Heart right ventricle (tissue), 16 donors: ENCODE measurements at regions of chr12 and their contacts with region 1.

Region 1: GRCh38 chr12:27747111-27747820 is 32.8 kb upstream of the KLHL42 start:
- DNase-seq: no peak
- ATAC-seq: peak in 2 of 8 donors; percentile 23 to 45
- H3K4me3 ChIP-seq: no peak overlapping the region
- H3K27ac ChIP-seq: peak overlapping the region in 2 of 10 donors; percentile 22 to 45
- H3K4me1 ChIP-seq: peaks cover 0 to 12% (median 0%) of the 10 kb centered on the region in 9 donors
- H3K27me3 ChIP-seq: no peaks in the 10 kb centered on the region
- CTCF ChIP-seq: no peak

Region 2: GRCh38 chr12:27682534-27682933 is 64.7 kb before region 1 on chr12:
- intact Hi-C with region 1: no loop called
- DNase-seq: no peak
- ATAC-seq: no peak
- H3K4me3 ChIP-seq: no peak overlapping the region
- H3K27ac ChIP-seq: no peak overlapping the region
- H3K4me1 ChIP-seq: no peaks in the 10 kb centered on the region
- H3K27me3 ChIP-seq: no peaks in the 10 kb centered on the region
- CTCF ChIP-seq: no peak

Region 3: DNA sequence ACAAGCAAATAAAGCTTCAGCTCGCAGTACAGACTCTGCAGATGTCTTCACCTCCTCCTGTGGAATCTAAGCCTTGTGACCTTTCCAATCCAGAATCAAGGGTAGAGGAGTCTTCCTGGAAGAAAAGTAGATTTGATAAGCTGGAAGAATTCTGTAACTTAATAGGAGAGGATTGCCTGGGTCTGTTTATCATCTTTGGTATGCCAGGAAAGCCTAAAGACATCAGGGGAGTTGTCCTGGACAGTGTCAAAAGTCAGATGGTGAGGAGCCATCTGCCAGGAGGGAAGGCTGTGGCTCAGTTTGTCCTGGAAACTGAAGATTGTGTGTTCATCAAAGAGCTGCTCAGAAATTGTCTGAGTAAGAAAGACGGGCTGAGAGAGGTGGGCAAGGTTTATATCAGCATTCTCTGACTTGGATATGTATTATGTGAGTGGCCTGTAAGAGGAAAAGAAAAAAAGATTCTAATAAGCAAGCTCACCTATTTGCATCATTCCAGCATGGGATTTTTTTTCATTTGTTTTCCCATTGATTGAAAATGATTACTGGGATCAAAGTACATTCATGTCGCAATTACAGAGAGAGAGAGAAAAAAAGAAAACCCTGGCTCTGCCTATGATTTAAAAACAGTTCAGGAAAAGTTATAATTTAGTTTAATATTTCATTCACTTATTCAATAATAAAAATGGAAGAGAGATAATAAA is 50.3 kb before region 1 on chr12:
- intact Hi-C with region 1: no loop called
- DNase-seq: no peak
- ATAC-seq: no peak
- H3K4me3 ChIP-seq: no peak overlapping the region
- H3K27ac ChIP-seq: no peak overlapping the region
- H3K4me1 ChIP-seq: no peaks in the 10 kb centered on the region
- H3K27me3 ChIP-seq: no peaks in the 10 kb centered on the region
- CTCF ChIP-seq: no peak

Region 4: GRCh38 chr12:27785882-27786570 is 38.8 kb after region 1 on chr12:
- intact Hi-C with region 1: no loop called
- DNase-seq: no peak
- ATAC-seq: no peak
- H3K4me3 ChIP-seq: no peak overlapping the region
- H3K27ac ChIP-seq: peak overlapping the region in 1 of 10 donors; percentile 5
- H3K4me1 ChIP-seq: peaks cover 0 to 37% (median 21%) of the 10 kb centered on the region in 9 donors
- H3K27me3 ChIP-seq: no peaks in the 10 kb centered on the region
- CTCF ChIP-seq: no peak

Region 5: GRCh38 chr12:27814851-27815591 is 67.8 kb after region 1 on chr12:
- intact Hi-C with region 1: loop called in 2 of 10 experiments (anchors 5 to 10 kb)
- DNase-seq: no peak
- ATAC-seq: no peak
- H3K4me3 ChIP-seq: no peak overlapping the region
- H3K27ac ChIP-seq: no peak overlapping the region
- H3K4me1 ChIP-seq: no peaks in the 10 kb centered on the region
- H3K27me3 ChIP-seq: peaks cover 0 to 4% (median 0%) of the 10 kb centered on the region in 7 donors
- CTCF ChIP-seq: no peak

Region 6: DNA sequence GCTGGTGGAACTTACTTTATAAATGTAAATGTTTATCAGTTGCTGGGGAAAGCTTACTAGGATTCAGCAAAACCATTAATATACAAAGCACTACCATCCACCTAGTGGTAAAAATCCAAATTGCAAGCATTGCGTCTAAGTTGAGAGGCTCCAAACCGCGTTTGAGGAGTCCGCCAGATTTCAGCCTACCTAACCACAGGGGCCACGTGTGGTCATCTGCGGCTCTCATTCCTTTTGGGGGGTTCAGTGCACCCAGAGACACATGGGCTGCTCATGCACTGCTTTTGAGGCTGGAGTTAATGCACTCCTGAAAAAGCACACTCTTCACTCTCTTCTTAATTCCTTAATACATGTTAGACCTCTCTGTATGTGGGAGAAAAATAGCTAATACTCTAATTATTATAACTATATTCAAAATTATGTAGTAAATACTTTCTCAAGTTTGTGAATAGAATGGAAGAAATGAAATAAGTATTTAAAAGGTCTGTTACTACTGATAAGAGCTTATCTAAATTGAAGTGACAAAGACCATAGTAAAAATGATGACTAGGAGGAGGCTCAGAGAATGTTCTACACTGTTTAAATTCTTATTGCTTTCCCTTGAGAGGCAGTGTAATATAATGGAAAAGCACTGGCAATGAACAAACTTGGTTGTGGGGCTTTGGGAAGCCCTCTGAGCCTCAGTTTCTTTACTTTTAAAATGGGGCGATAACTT is 74.2 kb after region 1 on chr12:
- intact Hi-C with region 1: loop called in 1 of 10 experiments (anchors 10 kb)
- DNase-seq: peak in 1 of 2 donors; percentile 50
- ATAC-seq: peak in 7 of 8 donors; percentile 45 to 79 (median 54)
- H3K4me3 ChIP-seq: no peak overlapping the region
- H3K27ac ChIP-seq: no peak overlapping the region
- H3K4me1 ChIP-seq: peaks cover 0 to 14% (median 0%) of the 10 kb centered on the region in 9 donors
- H3K27me3 ChIP-seq: peaks cover 0 to 7% (median 0%) of the 10 kb centered on the region in 7 donors
- CTCF ChIP-seq: peak; percentile 57 to 84 (median 77)